ENCODE measurements at regions of chr6 and their contacts with region 1.

Region 1: DNA sequence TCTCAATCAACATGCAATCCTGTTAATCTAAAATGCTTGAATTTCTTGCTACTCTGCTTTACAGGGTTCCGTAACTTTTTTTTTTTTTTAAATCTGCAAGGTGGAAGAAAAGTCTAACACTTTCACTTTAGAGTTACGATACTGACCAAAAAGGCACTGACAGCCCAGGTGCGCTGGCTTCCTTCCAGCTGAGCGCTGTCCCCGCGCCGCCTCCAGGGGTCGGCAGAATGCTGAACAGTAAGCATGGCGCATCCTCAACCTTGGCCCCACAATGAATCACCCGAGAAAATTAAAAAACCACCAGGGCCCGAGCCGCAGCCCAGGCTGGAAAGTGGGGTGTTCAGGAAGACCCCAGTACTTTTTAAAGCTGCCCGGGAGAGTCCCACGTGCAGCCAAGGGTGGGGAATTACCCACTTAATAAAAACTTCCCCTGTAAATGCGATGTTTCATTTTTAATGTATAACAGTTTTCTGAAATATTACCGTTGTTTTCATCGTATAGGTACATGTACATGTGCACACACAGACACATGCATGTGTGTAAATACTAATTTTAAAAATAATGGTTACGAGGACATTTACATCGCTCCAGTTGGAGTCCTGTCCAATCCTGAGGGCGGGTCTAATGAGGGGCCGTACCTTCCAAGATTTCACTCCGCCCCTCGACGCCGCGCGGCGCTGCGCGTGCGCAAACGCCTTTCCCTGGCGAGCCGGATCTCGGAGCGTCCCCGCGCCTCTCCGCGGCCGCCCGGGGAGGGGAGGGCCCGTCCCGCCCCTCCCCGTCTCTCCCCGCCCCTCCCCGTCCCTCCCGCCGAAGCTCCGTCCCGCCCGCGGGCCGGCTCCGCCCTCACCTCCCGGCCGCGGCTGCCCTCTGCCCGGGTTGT is at the start of gene GINM1:
- DNase-seq: peak; percentile 92 to 99 (median 96)
- ATAC-seq: peak; percentile 94
- H3K4me3 ChIP-seq: peak within 1 kb of the TSS; percentile 89
- H3K4me3 Mint-ChIP-seq: peak within 1 kb of the TSS; percentile 93 to 99 (median 97)
- H3K27ac ChIP-seq: peak within 1 kb of the TSS; percentile 95
- H3K27ac Mint-ChIP-seq: peak within 1 kb of the TSS; percentile 87 to 97 (median 97)
- H3K4me1 ChIP-seq: peaks cover 0 to 6% of the 10 kb centered on the region in 2 donors
- H3K4me1 Mint-ChIP-seq: peaks cover 3 to 39% (median 19%) of the 10 kb centered on the region in 7 donors
- H3K27me3 ChIP-seq: no peaks in the 10 kb centered on the region
- H3K27me3 Mint-ChIP-seq: peaks cover 0 to 7% (median 0%) of the 10 kb centered on the region in 5 donors
- total RNA-seq, gene GINM1: 14.4 to 27.3 (median 19.9) TPM

Region 2: DNA sequence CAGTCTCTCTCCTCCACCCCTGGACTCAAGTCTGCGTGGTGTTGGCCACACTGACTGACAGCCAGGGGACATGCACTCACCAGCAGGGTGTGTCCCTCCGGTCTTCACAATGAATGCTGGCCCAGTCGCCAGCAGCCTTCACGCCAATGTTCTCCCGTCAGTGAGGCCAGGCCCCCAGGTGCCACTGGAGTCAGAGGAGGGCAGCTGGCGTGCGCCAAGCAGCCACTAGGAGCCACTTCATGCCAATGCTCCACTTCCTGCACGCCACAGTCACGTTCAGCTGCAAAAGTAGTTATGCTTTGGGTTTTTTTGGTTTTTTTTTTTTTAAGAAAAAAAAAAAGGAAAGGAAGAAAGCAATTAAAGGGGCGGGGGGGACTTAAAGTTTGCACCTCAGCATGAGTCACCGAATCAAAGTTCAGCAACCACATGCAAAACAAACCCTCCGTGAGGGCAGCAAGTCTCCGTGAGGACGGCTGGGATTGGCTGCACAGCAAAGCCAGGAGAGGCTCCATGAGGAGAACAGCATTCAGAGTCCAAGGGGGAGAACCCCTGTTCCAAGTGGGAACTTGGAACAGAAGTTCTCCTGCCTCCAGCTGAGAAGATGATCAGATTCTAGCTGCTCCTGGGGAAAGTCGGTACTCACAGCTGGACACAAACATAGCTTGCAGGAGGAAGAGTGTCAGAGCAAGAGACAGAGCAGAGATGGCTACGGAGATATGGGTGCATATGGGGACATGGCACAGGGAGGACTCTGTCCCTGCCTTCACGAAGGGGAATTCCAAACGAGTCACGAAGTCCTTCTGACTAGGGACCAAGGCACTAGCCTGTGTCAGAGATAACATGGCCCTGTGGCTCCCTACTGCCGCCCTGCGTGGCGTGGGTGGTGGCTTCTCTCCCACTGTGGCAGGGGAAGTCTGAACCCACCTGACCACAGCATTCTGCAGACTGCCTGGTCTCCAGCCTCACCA is 80.8 kb before region 1 on chr6 and contains the start of gene ZC3H12D:
- CTCF ChIA-PET with region 1: no interaction called
- POLR2A ChIA-PET with region 1: no interaction called
- intact Hi-C with region 1: loop called (anchors 1 to 2 kb)
- DNase-seq: peak; percentile 65 to 85 (median 79)
- ATAC-seq: peak; percentile 83
- H3K4me3 ChIP-seq: peak within 1 kb of the TSS; percentile 57
- H3K4me3 Mint-ChIP-seq: peak within 1 kb of the TSS; percentile 85 to 95 (median 92)
- H3K27ac ChIP-seq: peak within 1 kb of the TSS; percentile 90
- H3K27ac Mint-ChIP-seq: peak within 1 kb of the TSS; percentile 94 to 100 (median 98)
- H3K4me1 ChIP-seq: peaks cover 25 to 41% of the 10 kb centered on the region in 2 donors
- H3K4me1 Mint-ChIP-seq: peaks cover 34 to 68% (median 57%) of the 10 kb centered on the region in 7 donors
- H3K27me3 ChIP-seq: no peaks in the 10 kb centered on the region
- H3K27me3 Mint-ChIP-seq: no peaks in the 10 kb centered on the region
- total RNA-seq, gene ZC3H12D: 30.1 to 85.6 (median 74.1) TPM

Region 3: DNA sequence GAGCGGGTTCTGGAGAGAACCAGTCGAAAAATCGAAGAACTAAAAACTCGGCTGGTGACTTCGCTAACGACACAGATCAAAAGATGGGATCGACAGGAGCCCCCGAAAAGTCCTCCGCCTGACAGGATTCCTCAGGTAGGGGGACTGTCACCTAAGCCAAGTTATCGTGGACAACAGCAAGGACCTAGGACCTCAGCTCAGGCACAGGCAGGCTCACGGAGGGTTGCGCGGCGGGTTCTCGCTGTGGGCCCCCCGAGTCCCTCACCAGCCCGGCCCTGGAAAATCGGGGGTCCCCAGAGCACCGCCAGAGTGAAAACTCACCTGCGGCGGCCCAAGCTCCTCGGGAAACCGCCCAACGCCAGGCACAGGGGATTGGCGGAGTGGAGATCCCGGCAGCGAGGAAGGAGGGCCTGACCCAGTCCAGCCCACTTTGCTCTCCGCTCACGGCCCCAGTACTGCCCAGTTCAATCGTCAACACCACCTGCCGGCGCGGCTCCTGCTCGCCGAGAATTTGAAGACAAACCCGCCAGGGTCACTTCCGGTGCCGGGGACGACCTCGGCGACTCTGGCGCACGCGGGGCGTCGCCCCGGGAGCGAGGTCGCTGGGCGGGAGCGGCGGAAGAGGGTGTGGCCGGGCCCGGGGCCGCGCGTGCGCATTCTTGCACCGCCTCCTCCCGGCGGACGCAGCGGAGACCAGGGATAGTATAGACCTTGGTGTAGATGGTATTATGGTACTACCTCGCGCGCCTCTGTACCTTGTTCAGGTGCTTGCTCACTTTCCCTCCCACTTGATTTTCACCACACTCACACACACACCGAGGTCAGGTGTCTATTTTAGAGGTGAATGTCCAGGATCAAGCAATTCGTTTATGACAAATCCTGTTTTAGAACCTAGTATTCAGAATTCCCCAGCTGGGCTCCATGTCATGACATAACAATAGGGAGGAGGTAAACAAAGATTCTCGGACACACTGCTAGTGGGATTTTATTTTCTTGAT is 82.7 kb after region 1 on chr6 and contains the start of gene KATNA1:
- CTCF ChIA-PET with region 1: no interaction called
- POLR2A ChIA-PET with region 1: interaction called, 3 read pairs
- intact Hi-C with region 1: loop called (anchors 1 kb)
- DNase-seq: peak; percentile 69 to 95 (median 81)
- ATAC-seq: peak; percentile 96
- H3K4me3 ChIP-seq: peak within 1 kb of the TSS; percentile 91
- H3K4me3 Mint-ChIP-seq: peak within 1 kb of the TSS; percentile 83 to 96 (median 91)
- H3K27ac ChIP-seq: peak within 1 kb of the TSS; percentile 82
- H3K27ac Mint-ChIP-seq: peak within 1 kb of the TSS; percentile 82 to 95 (median 90)
- H3K4me1 ChIP-seq: peaks cover 7 to 17% of the 10 kb centered on the region in 2 donors
- H3K4me1 Mint-ChIP-seq: peaks cover 2 to 41% (median 33%) of the 10 kb centered on the region in 7 donors
- H3K27me3 ChIP-seq: no peaks in the 10 kb centered on the region
- H3K27me3 Mint-ChIP-seq: no peaks in the 10 kb centered on the region
- total RNA-seq, gene KATNA1: 14.1 to 22.6 (median 16.7) TPM

Region 4: DNA sequence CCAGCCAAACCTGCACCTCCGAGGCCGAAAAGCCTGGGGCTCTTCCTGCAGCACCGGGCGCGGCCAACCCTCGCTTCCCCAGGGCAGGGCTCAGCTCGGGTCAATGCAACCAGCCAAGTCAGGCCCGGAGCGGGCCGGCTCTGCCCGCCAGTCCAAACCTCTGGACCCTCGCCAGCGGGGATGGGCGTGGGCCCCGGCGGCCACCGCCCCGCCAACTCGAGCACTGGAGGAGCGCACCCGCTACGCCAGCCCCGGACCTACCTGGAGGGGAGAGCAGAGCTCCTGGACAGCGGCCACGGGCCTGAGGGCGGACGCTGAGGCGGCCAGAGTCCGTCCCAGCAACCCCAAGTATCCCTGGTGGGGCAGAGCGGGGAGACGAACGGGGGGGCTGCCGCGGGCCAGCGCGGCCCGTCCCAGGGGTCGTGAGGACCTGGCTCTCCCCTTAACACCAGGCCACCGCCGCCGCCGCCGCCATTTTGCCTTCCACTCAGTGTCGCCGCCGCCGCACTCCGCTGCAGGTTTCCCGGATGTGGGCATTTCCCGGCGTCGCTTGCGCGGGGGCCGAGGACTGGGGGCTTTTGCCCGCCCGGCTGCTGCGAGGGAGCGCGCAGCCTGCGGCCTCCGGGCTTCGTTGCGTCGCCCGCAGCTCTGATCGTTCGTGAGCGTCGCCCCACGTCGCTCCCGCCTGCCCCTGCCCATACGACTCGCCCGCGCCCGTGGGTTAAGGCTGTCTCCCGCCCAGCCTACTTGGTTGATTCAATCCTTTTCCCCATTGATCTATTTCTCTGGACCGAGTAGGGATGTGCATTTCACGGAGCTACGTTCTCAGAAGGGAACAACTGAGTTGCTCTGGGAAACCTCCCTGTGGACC is 152.1 kb after region 1 on chr6 and contains the start of gene LATS1:
- CTCF ChIA-PET with region 1: no interaction called
- POLR2A ChIA-PET with region 1: interaction called, 13 read pairs
- intact Hi-C with region 1: loop called (anchors 1 kb)
- DNase-seq: peak; percentile 76 to 96 (median 91)
- ATAC-seq: peak; percentile 96
- H3K4me3 ChIP-seq: peak within 1 kb of the TSS; percentile 72
- H3K4me3 Mint-ChIP-seq: peak within 1 kb of the TSS; percentile 89 to 99 (median 94)
- H3K27ac ChIP-seq: peak within 1 kb of the TSS; percentile 97
- H3K27ac Mint-ChIP-seq: peak within 1 kb of the TSS; percentile 95 to 99 (median 97)
- H3K4me1 ChIP-seq: peaks cover 11 to 19% of the 10 kb centered on the region in 2 donors
- H3K4me1 Mint-ChIP-seq: peaks cover 18 to 51% (median 44%) of the 10 kb centered on the region in 7 donors
- H3K27me3 ChIP-seq: no peaks in the 10 kb centered on the region
- H3K27me3 Mint-ChIP-seq: no peaks in the 10 kb centered on the region
- total RNA-seq, gene LATS1: 33.3 to 49.5 (median 44.6) TPM

Region 5: DNA sequence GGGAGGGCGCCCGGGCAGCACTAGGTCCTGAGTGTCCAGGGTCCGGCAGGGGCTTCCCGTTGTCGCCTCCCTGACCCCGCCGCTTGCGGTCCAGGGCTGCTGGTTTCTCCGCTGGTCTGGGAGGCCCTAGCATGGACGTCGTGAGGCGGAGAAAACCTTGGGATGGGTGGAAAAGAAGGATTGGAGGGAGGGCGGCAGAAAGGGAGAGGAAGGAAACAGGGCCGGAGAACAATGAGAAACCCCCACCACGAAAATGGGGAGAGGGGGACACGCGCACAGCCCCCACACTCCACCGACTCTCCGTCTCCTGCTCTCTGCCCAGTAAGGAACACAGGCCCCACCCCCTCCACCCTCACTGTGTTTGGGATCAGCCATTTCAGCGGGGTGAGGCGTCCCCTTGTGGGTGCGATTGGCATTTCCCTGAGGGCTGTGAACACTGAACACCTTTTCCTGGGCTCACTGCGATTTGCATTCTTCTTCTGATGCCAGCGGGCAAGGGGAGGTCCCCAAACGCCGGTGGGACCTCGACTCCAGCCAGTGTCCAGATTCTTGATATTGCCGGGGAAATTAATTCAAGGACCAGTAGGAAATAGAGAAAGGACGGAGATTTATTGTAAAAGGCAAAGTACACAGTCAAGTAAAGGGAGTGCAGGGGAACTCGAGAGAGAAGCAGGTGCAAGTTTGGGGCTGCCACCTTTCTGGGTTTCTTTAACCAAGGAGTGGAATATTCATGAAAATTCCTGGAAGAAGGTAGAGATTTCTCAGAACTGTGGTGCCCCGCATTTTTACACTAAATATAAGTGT is 360.4 kb after region 1 on chr6:
- CTCF ChIA-PET with region 1: no interaction called
- POLR2A ChIA-PET with region 1: no interaction called
- intact Hi-C with region 1: loop called in 1 of 2 experiments (anchors 5 kb)
- DNase-seq: peak; percentile 35 to 77 (median 56)
- ATAC-seq: peak; percentile 76
- H3K4me3 ChIP-seq: no peak overlapping the region
- H3K4me3 Mint-ChIP-seq: peak overlapping the region in 9 of 10 donors; percentile 12 to 73 (median 40)
- H3K27ac ChIP-seq: no peak overlapping the region
- H3K27ac Mint-ChIP-seq: peak overlapping the region in 1 of 9 donors; percentile 10
- H3K4me1 ChIP-seq: peaks cover 6 to 7% of the 10 kb centered on the region in 2 donors
- H3K4me1 Mint-ChIP-seq: peaks cover 18 to 30% (median 26%) of the 10 kb centered on the region in 7 donors
- H3K27me3 ChIP-seq: peaks cover 21 to 32% of the 10 kb centered on the region in 2 donors
- H3K27me3 Mint-ChIP-seq: peaks cover 85 to 93% (median 87%) of the 10 kb centered on the region in 5 donors

Region 6: DNA sequence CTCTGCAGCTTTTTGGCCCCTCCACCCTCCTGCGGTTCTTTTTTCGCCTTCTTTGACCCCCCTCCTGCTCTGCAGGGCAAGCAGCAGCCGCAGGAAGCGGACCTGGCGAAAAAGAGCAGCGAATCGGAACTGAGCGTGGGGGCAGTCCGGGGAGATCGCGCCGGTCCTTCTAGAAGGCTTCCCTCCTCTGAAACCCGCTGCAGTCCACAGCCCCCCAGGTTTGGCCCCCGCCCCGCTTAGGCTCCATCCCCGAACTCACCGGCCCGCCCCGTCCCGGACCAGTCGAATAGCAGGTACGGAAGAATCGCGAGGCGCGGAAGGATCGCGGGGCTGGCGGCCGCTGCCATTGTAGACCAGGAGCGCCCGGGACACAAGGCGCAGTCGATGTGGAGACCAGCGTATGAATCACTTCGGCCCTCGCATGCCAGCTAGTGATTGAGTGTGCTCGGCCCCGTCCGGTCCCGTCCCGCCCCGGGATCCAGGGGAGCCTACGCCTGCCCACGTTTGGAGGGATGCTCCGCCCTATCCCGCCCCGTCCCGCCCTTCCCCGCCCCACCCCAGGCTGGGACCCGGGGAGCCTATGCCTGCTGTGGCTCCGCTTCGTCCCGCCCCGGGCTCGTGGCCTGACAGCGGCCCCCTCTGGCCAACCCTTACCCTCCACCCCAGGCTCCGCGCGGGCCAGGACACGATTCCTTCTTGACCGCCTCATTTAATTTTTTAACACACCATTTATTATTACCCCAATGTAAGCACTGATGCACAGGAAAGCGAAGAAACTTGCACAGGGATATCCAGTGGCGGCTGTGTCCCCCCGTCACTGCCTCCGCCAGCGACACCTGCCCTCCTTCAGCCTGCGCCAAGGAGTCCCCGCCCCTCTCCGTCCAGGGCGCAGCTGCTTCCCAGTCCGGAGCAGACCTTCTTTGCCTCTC is 503.2 kb after region 1 on chr6 and contains the start of gene ULBP3:
- CTCF ChIA-PET with region 1: no interaction called
- POLR2A ChIA-PET with region 1: no interaction called
- intact Hi-C with region 1: loop called in 1 of 2 experiments (anchors 5 kb)
- DNase-seq: peak; percentile 24 to 75 (median 35)
- ATAC-seq: peak; percentile 83
- H3K4me3 ChIP-seq: peak within 1 kb of the TSS; percentile 77
- H3K4me3 Mint-ChIP-seq: peak within 1 kb of the TSS; percentile 80 to 95 (median 90)
- H3K27ac ChIP-seq: no peak within 1 kb of the TSS
- H3K27ac Mint-ChIP-seq: peak within 1 kb of the TSS in 4 of 9 donors; percentile 49 to 82 (median 72)
- H3K4me1 ChIP-seq: peaks cover 0 to 5% of the 10 kb centered on the region in 2 donors
- H3K4me1 Mint-ChIP-seq: peaks cover 10 to 22% (median 14%) of the 10 kb centered on the region in 7 donors
- H3K27me3 ChIP-seq: no peaks in the 10 kb centered on the region
- H3K27me3 Mint-ChIP-seq: peaks cover 4 to 35% (median 12%) of the 10 kb centered on the region in 5 donors
- total RNA-seq, gene ULBP3: 0.42 to 1.5 TPM in 2 of 5 experiments, not detected in the others

Measured in naive thymus-derived CD4-positive, alpha-beta T cell (primary cell).